ENCODE measurements at regions of chr4 and their contacts with region 1.

Region 1: DNA sequence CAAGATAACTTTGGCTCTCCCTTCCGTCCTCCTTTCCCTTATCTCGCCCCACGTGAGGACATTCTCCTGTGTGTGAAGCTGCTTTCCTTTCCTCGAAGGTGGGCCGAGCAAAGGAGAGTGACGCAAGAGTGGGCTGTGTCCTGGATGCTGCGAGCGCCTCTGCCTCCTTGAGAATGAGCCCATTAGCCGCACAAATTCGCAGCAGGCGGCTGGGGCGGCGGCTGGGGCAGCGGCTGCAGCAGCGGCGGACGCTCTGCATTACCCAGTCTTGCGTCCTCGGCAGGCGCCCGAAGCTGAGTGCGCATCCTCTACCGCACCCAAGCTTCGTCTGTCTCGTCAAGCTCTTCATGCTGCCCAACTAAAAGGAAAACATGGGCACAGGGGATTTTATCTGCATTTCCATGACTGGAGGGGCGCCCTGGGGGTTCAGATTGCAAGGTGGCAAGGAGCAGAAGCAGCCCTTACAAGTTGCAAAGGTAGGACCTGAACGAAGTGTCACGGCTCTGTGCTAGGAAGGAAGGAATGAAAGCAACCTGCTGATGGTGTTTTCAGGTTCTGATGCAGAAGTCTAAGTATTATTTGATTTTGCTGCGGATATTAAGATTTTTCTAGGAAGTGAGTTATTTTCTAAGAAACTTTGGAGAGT is at the start of gene SYNPO2:
- DNase-seq: peak; percentile 76
- H3K4me3 ChIP-seq: peak within 1 kb of the TSS; percentile 8 to 50 (median 30)
- H3K27ac ChIP-seq: no peak within 1 kb of the TSS
- H3K4me1 ChIP-seq: peaks cover 8% of the 10 kb centered on the region
- H3K27me3 ChIP-seq: no peaks in the 10 kb centered on the region
- CTCF ChIP-seq: no peak
- POLR2A ChIP-seq: no peak
- total RNA-seq, gene SYNPO2: 0.07 and 0.13 TPM in 2 replicates

Region 2: GRCh38 chr4:118740869-118741268 is 147.9 kb before region 1 on chr4:
- CTCF ChIA-PET with region 1: interaction called, 3 read pairs
- POLR2A ChIA-PET with region 1: no interaction called
- dilution Hi-C with region 1: no loop called
- intact Hi-C with region 1: loop called (anchors 1 kb)
- DNase-seq: no peak
- H3K4me3 ChIP-seq: no peak overlapping the region
- H3K27ac ChIP-seq: no peak overlapping the region
- H3K4me1 ChIP-seq: peaks cover 2% of the 10 kb centered on the region
- H3K27me3 ChIP-seq: no peaks in the 10 kb centered on the region
- CTCF ChIP-seq: peak in 1 of 2 donors; percentile 3
- POLR2A ChIP-seq: no peak

Region 3: DNA sequence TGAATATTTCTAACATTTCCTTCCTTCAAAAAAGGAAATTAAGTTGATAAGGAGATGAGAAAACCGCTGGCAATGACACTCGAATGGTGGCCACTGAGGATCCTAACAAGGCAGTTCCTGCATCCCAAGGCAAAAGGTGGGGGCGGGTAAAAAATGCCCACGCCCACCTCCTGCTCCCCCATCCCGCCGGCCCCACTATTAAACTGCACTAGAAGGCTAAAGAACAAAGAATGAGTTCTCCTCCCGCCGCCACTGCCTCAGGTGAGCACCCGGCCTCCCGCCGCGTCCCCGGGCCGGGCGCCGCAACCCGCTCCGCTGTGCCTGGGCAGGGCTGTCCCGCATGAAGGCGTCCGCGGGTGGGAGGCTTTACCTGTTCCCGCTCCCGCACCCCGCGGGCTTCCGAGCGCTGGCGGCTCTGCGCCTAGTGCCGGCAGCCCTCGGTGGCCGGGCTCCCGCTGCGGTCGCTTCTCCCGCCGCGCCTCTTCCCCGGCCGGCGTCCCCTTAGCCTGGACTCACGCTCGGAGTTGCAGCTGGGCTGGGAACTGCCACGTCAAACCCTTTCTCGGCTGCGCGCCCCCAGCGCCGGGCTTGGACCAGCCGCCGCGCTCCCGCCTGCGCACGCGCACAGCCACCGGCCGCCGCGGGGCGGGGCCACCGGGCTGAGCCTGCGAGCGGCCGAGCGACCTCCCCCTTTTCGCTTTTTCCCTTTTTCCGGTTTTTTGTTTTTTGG is 53.1 kb before region 1 on chr4 and contains the start of gene SEC24D:
- CTCF ChIA-PET with region 1: interaction called, 9 read pairs
- POLR2A ChIA-PET with region 1: no interaction called
- dilution Hi-C with region 1: no loop called
- intact Hi-C with region 1: loop called (anchors 1 kb)
- DNase-seq: peak; percentile 89
- H3K4me3 ChIP-seq: peak within 1 kb of the TSS; percentile 87 to 95 (median 95)
- H3K27ac ChIP-seq: peak within 1 kb of the TSS; percentile 91
- H3K4me1 ChIP-seq: peaks cover 20% of the 10 kb centered on the region
- H3K27me3 ChIP-seq: no peaks in the 10 kb centered on the region
- CTCF ChIP-seq: no peak
- POLR2A ChIP-seq: peak; percentile 73
- total RNA-seq, gene SEC24D: 127 and 133 TPM in 2 replicates

Region 4: GRCh38 chr4:118905566-118905965 is 16.8 kb after region 1 on chr4:
- CTCF ChIA-PET with region 1: interaction called, 16 read pairs
- POLR2A ChIA-PET with region 1: no interaction called
- dilution Hi-C with region 1: no loop called
- intact Hi-C with region 1: no loop called
- DNase-seq: peak; percentile 77
- H3K4me3 ChIP-seq: no peak overlapping the region
- H3K27ac ChIP-seq: peak overlapping the region; percentile 49
- H3K4me1 ChIP-seq: peaks cover 13% of the 10 kb centered on the region
- H3K27me3 ChIP-seq: no peaks in the 10 kb centered on the region
- CTCF ChIP-seq: no peak
- POLR2A ChIP-seq: no peak

Measured in endothelial cell of umbilical vein (primary cell).